IMR-90 (cell line): ENCODE measurements at regions of chr19 and their contacts with region 1.

Region 1: GRCh38 chr19:48872182-48872883 is at the start of gene PPP1R15A:
- DNase-seq: peak; percentile 97
- ATAC-seq: peak; percentile 28
- H3K4me3 ChIP-seq: peak within 1 kb of the TSS; percentile 71
- H3K27ac ChIP-seq: peak within 1 kb of the TSS; percentile 92
- H3K4me1 ChIP-seq: peaks cover 15% of the 10 kb centered on the region
- H3K27me3 ChIP-seq: no peaks in the 10 kb centered on the region
- CTCF ChIP-seq: no peak
- POLR2A ChIP-seq: peak; percentile 100
- RAD21 ChIP-seq: no peak
- total RNA-seq, gene PPP1R15A: 26.7 and 39.4 TPM in 2 replicates

Region 2: GRCh38 chr19:48812094-48812929 is 60.0 kb before region 1 on chr19:
- CTCF ChIA-PET with region 1: no interaction called
- POLR2A ChIA-PET with region 1: no interaction called
- dilution Hi-C with region 1: no loop called
- in situ Hi-C with region 1: no loop called
- intact Hi-C with region 1: no loop called
- DNase-seq: peak; percentile 13
- ATAC-seq: peak; percentile 75
- H3K4me3 ChIP-seq: peak overlapping the region; percentile 40
- H3K27ac ChIP-seq: no peak overlapping the region; the same call in 1 of the 2 replicates
- H3K4me1 ChIP-seq: peaks cover 5% of the 10 kb centered on the region; the same call in 1 of the 2 replicates
- H3K27me3 ChIP-seq: no peaks in the 10 kb centered on the region
- CTCF ChIP-seq: no peak
- POLR2A ChIP-seq: no peak
- RAD21 ChIP-seq: no peak

Region 3: DNA sequence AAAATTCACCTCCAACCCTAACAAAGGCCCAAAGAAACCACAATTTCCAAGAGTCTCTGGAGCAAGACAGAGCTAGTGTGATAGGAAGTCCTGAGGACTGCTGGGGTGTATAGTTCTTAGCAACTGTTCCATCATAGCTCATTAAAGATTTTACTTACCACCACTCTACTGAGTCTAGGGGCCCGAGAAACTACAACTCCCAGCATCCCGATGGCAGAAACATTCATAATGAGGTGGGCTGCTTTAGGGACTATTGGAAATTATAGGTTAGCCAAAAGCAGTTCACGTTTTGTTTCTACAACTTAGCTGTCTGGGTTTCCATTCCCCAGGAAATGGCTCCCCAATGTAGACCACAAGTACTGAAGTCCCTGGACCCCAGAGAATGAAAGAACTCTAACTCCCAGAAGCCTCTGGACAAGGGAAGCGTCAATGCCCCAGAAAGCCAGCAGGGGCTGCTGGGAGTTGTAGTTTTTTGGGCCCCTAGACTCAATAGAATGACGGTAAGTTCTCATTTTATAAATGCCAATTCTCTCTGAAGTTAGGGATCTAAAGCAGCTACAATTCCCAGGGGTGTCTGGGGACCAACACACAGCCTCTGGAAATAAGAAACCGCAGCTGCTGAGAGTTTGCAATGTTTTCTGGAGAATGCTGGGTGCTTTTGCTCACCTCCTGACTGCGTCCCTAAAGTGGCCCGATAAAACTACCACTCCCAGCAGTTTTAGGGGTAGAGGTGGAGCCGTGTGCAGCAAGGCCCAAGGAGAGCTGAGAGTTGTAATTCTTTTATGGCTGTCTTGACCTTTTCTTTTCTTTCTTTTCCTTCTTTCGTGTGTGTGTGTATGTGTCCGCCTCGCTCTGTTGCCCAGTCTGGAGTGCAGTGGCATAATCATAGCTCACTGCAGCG is 103.9 kb after region 1 on chr19:
- CTCF ChIA-PET with region 1: interaction called, 8 read pairs
- POLR2A ChIA-PET with region 1: interaction called, 13 read pairs
- dilution Hi-C with region 1: no loop called
- in situ Hi-C with region 1: no loop called
- intact Hi-C with region 1: no loop called
- DNase-seq: no peak
- ATAC-seq: no peak
- H3K4me3 ChIP-seq: no peak overlapping the region
- H3K27ac ChIP-seq: no peak overlapping the region
- H3K4me1 ChIP-seq: peaks cover 7% of the 10 kb centered on the region
- H3K27me3 ChIP-seq: no peaks in the 10 kb centered on the region
- CTCF ChIP-seq: no peak
- POLR2A ChIP-seq: no peak
- RAD21 ChIP-seq: no peak

Region 4: DNA sequence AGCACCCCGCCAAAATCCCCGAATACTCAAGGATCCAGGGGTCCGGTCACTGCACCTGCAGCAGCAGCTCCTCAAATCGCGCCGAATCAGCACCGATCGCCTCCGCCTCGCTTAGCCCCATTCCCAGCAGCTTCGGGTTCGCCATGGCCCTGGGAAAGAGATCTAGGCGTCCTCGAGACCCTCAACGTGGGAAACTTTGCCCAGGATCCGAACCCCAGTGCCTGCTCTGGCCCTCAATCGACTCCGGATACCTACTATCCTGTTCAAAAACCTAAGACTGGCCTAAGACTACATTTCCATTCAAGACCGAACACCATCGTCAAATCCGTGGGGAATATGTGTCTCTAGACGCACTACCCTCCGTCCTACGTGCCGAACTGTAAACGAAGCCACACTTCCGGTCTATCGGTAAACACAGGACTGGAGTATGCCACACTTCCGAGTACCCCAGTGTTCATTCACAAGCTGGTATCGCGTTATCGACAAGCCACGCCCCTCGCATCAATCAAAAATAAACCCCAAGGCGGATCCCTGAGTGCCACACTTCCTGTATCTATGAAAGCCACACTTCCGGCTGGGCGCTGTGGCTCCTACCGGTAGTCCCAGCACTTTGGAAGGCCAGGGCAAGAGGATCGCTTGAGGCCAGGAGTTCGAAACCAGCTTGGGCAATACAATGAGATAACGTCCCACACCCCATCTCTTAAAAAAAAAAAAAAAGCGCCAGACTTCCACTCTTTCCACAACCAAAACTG is 579.3 kb after region 1 on chr19 and contains the start of gene PIH1D1:
- CTCF ChIA-PET with region 1: no interaction called
- POLR2A ChIA-PET with region 1: no interaction called
- dilution Hi-C with region 1: no loop called
- in situ Hi-C with region 1: no loop called
- intact Hi-C with region 1: no loop called
- DNase-seq: peak; percentile 99
- ATAC-seq: peak; percentile 71
- H3K4me3 ChIP-seq: peak within 1 kb of the TSS; percentile 56
- H3K27ac ChIP-seq: peak within 1 kb of the TSS; percentile 87
- H3K4me1 ChIP-seq: peaks cover 2% of the 10 kb centered on the region; the same call in 1 of the 2 replicates
- H3K27me3 ChIP-seq: no peaks in the 10 kb centered on the region
- CTCF ChIP-seq: no peak
- POLR2A ChIP-seq: peak; percentile 84
- RAD21 ChIP-seq: no peak
- total RNA-seq, gene PIH1D1: 122 and 125 TPM in 2 replicates